Endothelial cell of umbilical vein (primary cell): ENCODE measurements at regions of chr3 and their contacts with region 1.

Region 1: DNA sequence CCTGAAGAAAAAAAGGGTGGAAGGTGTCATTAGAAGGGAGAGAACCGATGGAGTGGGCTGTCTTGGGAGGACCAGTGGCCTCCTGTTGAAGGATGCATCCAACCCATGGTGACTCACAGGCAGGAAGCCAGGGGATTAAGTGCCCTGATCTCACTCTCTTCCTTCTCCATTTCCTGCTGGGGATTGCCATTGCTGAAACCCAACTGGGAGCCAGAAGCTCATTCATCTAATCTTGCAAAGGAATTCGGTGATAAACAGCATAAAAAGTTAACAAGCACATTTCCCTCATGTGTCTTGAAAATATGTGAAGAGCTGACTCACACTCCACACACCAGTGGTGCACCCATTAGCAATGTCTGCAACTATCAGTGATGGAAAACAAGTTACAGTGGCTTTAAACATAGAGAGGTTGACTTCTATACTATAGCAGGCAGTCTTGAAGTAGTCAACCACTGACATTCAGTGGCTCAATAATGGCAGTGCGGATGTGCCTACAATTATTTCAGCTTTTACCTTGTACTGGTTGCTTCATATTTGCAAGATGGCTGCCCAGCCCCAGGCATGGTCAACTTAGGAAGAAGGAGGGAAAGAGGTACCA is 12.8 kb upstream of the CSRNP1 start:
- DNase-seq: peak; percentile 94
- H3K4me3 ChIP-seq: no peak overlapping the region
- H3K27ac ChIP-seq: peak overlapping the region; percentile 79
- H3K4me1 ChIP-seq: peaks cover 29% of the 10 kb centered on the region
- H3K27me3 ChIP-seq: no peaks in the 10 kb centered on the region
- CTCF ChIP-seq: no peak
- POLR2A ChIP-seq: peak; percentile 37

Region 2: DNA sequence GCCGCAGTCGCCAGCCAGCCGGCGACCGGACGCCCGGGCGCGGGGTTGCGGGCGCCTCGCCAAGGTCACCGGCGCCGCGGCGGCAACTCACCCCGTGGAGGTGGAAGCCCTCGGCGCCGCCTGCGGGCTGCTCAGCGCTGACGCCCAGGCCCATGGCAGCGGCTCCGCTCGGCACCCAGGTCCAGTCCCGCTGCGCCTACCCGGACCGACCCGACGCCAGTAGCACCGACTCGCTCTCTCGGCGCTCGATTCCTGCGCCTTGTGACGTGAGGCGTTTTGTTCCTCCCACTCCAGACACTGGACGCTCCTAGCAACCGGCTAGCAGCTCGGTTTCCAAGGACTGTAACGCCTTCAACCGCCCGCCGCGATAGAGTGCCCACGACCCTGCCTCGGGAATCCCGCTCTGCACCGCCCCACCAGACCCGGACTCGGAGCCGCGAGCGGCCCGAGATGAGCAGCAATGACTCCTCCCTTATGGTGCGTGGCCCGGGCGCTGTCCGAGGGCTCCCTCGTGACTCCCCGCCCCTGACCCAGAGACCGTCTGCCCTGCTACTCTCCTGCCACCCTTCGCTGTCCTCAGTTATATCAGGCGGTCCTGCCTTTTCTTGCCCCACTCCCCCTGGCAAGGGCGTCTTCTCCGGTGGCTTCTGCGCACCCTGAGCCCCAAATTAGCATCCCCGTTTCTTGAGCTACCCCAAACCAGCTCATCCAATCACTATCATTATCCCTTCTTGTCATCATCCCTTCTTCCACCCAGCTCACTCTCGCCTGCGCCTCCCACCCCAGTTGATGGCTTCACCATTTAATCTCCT is 58.6 kb before region 1 on chr3 and contains the starts of genes GORASP1 and TTC21A:
- CTCF ChIA-PET with region 1: interaction called, 3 read pairs
- POLR2A ChIA-PET with region 1: no interaction called
- dilution Hi-C with region 1: no loop called
- intact Hi-C with region 1: loop called (anchors 1 kb)
- DNase-seq: peak; percentile 86
- H3K4me3 ChIP-seq: peak within 1 kb of the TSS; percentile 69 to 84 (median 78)
- H3K27ac ChIP-seq: peak within 1 kb of the TSS; percentile 75
- H3K4me1 ChIP-seq: peaks cover 18% of the 10 kb centered on the region
- H3K27me3 ChIP-seq: no peaks in the 10 kb centered on the region
- CTCF ChIP-seq: no peak
- POLR2A ChIP-seq: peak; percentile 67
- total RNA-seq, gene GORASP1: 68.0 and 74.7 TPM in 2 replicates
- total RNA-seq, gene TTC21A: 6.3 and 7.8 TPM in 2 replicates